ENCODE measurements at regions of chr7 and their contacts with region 1.

Region 1: GRCh38 chr7:150778738-150779301 is 21.3 kb downstream of the TMEM176B start:
- DNase-seq: peak; percentile 84 to 96 (median 90)
- ATAC-seq: peak; percentile 96
- H3K4me3 ChIP-seq: no peak overlapping the region
- H3K4me1 ChIP-seq: peaks cover 9% of the 10 kb centered on the region
- CTCF ChIP-seq: peak; percentile 81

Region 2: GRCh38 chr7:150876817-150877526 is 98.2 kb after region 1 on chr7:
- intact Hi-C with region 1: loop called in 1 of 2 experiments (anchors 2 kb)
- DNase-seq: peak; percentile 62 to 78 (median 72)
- ATAC-seq: peak; percentile 91
- H3K4me3 ChIP-seq: no peak overlapping the region
- H3K4me1 ChIP-seq: peaks cover 2% of the 10 kb centered on the region
- CTCF ChIP-seq: peak; percentile 16

Region 3: DNA sequence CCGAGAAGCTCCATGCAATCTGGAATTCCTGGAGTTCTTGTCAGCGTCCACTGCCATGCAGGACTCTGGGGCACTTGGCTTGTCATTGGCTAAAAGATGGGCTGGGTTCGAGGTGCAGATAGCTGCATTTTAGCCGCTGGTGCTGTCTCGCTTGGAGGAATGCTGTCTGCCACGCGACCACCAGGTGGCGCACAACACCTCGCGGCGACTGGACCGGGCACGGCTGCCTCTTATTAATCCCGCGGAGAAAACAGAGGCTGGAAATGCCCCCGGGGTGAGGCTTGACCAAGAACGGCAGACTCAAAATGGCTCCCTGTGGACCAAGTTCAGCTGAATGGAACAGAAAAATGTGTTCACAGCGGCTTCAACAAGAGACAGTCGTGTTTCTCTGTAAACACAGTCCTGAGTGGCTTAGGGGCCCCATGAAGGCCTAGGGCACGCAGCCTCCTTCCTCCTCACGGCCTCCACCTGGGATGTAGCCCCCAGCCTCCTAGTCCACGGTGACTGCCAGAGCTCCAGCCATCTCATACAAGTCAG is 119.7 kb after region 1 on chr7:
- intact Hi-C with region 1: loop called in 1 of 2 experiments (anchors 10 kb)
- DNase-seq: peak; percentile 80 to 90 (median 87)
- ATAC-seq: peak; percentile 50
- H3K4me3 ChIP-seq: no peak overlapping the region
- H3K4me1 ChIP-seq: peaks cover 29% of the 10 kb centered on the region
- CTCF ChIP-seq: peak; percentile 92

Region 4: DNA sequence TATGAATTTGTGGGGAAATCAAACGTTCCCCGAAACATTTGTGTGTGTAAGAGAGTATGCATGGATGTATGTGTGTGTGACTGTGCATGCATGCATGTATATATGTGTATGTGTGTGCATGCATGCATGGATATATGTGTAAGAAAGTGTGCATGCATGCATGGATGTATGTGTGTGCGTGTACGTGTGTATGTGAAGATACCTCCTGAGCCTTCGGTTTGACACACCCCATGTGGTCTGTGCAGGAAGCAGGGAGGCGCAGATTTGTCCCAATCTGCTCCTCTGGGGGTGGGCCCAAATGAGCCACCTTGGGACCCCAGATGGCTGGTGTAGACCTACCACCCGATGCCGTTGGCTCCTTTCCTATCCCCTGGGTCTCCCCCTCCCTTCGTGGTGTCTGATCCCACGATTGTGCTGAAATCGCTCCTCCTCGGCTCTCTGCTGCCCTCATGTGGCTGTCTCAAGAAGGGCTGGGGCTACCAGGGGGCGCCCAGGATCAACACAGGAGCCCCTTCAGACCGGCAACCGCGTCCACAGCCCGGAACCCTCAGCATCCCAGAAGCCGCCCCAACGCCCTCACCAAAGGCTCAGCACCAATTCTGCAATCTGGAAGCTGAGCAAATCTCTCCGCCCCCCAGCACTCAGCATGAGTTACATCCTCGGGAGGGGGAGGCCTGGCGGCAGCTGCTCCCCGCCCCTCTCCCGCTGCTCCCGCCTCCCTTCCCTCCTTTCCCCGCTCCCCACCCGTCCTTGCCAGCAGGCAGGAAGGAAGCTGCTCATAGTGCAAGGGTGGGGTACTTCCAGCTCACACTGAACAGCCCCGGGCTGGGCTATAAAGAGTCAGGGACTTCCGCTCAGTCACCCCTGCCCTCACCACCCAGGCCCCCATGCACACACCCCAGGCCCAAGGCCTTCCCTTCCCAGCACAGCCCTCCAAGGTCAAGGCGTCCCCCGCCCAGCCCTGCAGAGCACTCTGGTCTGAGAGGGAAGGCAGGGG is 209.7 kb after region 1 on chr7:
- intact Hi-C with region 1: loop called in 1 of 2 experiments (anchors 10 kb)
- DNase-seq: peak; percentile 56 to 62 (median 61)
- ATAC-seq: peak; percentile 56
- H3K4me3 ChIP-seq: no peak overlapping the region
- H3K4me1 ChIP-seq: peaks cover 7% of the 10 kb centered on the region
- CTCF ChIP-seq: peak; percentile 79